ENCODE measurements at regions of chr9 and their contacts with region 1.

Region 1: GRCh38 chr9:6412487-6413364 is at the start of gene UHRF2:
- DNase-seq: peak; percentile 98 to 100 (median 99)
- ATAC-seq: peak; percentile 90
- H3K4me3 ChIP-seq: peak within 1 kb of the TSS; percentile 70
- H3K4me3 Mint-ChIP-seq: peak within 1 kb of the TSS; percentile 93
- H3K27ac ChIP-seq: peak within 1 kb of the TSS; percentile 81 to 91
- H3K27ac Mint-ChIP-seq: peak within 1 kb of the TSS; percentile 88
- H3K4me1 ChIP-seq: peaks cover 32% of the 10 kb centered on the region
- H3K4me1 Mint-ChIP-seq: peaks cover 42% of the 10 kb centered on the region
- H3K27me3 ChIP-seq: no peaks in the 10 kb centered on the region
- H3K27me3 Mint-ChIP-seq: no peaks in the 10 kb centered on the region
- CTCF ChIP-seq: no peak
- total RNA-seq, gene UHRF2: 141 to 149 TPM

Region 2: DNA sequence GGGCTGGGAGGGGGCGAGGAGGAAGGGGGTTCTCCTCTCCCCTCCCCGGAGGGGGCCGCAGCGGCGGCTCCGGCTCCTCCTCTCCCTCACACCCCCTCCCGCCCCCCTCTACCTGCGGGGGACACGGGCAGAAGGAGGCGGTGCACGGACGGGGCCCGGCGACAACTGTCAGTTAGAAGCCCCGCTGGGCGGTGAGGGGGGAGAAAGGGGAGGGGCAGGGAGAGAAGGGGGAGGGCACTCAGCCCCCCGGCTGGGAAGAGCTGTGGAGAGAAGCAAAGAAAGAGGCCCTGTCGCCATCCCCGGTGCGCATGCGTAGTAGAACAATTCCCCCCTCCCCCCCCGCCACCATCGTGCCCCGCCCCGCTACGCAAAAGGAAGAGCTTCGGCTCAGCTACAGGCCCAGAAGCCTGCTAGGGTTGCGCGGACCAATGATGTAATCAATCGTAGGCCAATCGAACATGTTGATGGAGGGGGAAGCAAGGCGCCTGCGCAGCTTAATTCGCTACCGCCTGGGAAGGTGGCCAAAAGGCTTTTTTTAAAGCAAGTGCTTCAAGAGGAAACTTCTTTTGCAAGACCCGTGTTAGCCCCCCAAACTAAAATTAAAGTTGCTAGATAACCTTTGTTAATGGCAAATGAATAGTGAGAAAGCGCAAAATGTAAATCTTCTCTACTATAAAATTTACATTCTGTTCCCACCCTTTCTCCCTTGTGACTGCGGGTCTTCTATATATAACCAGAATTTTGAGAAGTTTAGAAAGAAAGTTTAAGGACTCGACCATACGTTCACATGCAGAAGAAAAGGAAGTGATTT is 404.4 kb before region 1 on chr9:
- CTCF ChIA-PET with region 1: no interaction called
- POLR2A ChIA-PET with region 1: interaction called, 14 read pairs
- intact Hi-C with region 1: loop called (anchors 5 to 10 kb)
- DNase-seq: peak; percentile 88 to 99 (median 92)
- ATAC-seq: peak; percentile 70
- H3K4me3 ChIP-seq: peak overlapping the region; percentile 87
- H3K4me3 Mint-ChIP-seq: peak overlapping the region; percentile 91
- H3K27ac ChIP-seq: peak overlapping the region; percentile 91 to 95
- H3K27ac Mint-ChIP-seq: peak overlapping the region; percentile 97
- H3K4me1 ChIP-seq: peaks cover 11% of the 10 kb centered on the region
- H3K4me1 Mint-ChIP-seq: peaks cover 70% of the 10 kb centered on the region
- H3K27me3 ChIP-seq: no peaks in the 10 kb centered on the region
- H3K27me3 Mint-ChIP-seq: no peaks in the 10 kb centered on the region
- CTCF ChIP-seq: no peak

Region 3: GRCh38 chr9:6353851-6354686 is 58.7 kb before region 1 on chr9:
- CTCF ChIA-PET with region 1: no interaction called
- POLR2A ChIA-PET with region 1: interaction called, 8 read pairs
- intact Hi-C with region 1: loop called in 1 of 2 experiments (anchors 2 kb)
- DNase-seq: peak in 10 of 14 experiments; percentile 2 to 74 (median 11)
- ATAC-seq: peak; percentile 85
- H3K4me3 ChIP-seq: no peak overlapping the region
- H3K4me3 Mint-ChIP-seq: no peak overlapping the region
- H3K27ac ChIP-seq: no peak overlapping the region
- H3K27ac Mint-ChIP-seq: no peak overlapping the region
- H3K4me1 ChIP-seq: no peaks in the 10 kb centered on the region
- H3K4me1 Mint-ChIP-seq: no peaks in the 10 kb centered on the region
- H3K27me3 ChIP-seq: no peaks in the 10 kb centered on the region
- H3K27me3 Mint-ChIP-seq: peaks cover 6% of the 10 kb centered on the region
- CTCF ChIP-seq: peak; percentile 80

Region 4: DNA sequence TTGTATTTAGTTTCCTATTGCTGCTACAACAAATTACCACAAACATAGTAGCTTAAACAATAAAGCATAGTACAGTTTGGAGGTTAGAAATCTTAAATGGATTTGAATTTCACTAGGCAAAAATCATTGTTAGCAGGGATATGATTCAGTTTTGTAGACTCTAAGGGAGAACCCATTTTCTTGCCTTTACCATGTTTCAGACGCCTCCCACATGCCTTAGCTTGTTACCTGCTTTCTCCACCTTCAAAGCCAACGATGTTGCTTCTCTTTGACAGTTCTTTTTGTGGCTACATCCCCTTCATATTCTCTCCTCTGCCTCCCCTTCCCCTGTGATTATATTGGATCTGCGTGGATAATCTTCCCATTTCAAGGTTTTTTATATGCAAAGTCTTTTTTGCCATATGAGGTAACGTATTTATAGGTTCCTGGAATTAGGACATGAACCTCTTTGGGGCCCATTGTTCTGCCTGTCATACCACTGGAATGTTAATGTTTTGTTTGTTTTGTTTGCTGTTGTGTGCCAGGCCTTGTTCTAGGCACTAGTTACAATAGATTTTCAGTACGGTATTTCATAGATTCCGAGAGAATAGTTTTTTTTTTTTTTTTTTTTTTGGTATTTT is 54.4 kb after region 1 on chr9:
- CTCF ChIA-PET with region 1: no interaction called
- POLR2A ChIA-PET with region 1: interaction called, 15 read pairs
- intact Hi-C with region 1: loop called (anchors 5 kb)
- DNase-seq: no peak
- ATAC-seq: no peak
- H3K4me3 ChIP-seq: no peak overlapping the region
- H3K4me3 Mint-ChIP-seq: no peak overlapping the region
- H3K27ac ChIP-seq: no peak overlapping the region
- H3K27ac Mint-ChIP-seq: no peak overlapping the region
- H3K4me1 ChIP-seq: no peaks in the 10 kb centered on the region
- H3K4me1 Mint-ChIP-seq: peaks cover 40% of the 10 kb centered on the region
- H3K27me3 ChIP-seq: no peaks in the 10 kb centered on the region
- H3K27me3 Mint-ChIP-seq: no peaks in the 10 kb centered on the region
- CTCF ChIP-seq: no peak

Region 5: GRCh38 chr9:6703898-6704639 is 291.3 kb after region 1 on chr9:
- CTCF ChIA-PET with region 1: no interaction called
- POLR2A ChIA-PET with region 1: interaction called, 15 read pairs
- intact Hi-C with region 1: loop called in 1 of 2 experiments (anchors 5 kb)
- DNase-seq: peak; percentile 72 to 94 (median 81)
- ATAC-seq: peak; percentile 85
- H3K4me3 ChIP-seq: peak overlapping the region; percentile 67
- H3K4me3 Mint-ChIP-seq: peak overlapping the region; percentile 92
- H3K27ac ChIP-seq: peak overlapping the region; percentile 90 to 92
- H3K27ac Mint-ChIP-seq: peak overlapping the region; percentile 91
- H3K4me1 ChIP-seq: peaks cover 16% of the 10 kb centered on the region
- H3K4me1 Mint-ChIP-seq: peaks cover 18% of the 10 kb centered on the region
- H3K27me3 ChIP-seq: no peaks in the 10 kb centered on the region
- H3K27me3 Mint-ChIP-seq: no peaks in the 10 kb centered on the region
- CTCF ChIP-seq: no peak

Measured in CD4-positive, alpha-beta T cell (primary cell).